Activated naive CD4-positive, alpha-beta T cell treated with anti-CD3 and anti-CD28 coated beads for 36 hours (primary cell): ENCODE measurements at regions of chr5 and their contacts with region 1.

Region 1: DNA sequence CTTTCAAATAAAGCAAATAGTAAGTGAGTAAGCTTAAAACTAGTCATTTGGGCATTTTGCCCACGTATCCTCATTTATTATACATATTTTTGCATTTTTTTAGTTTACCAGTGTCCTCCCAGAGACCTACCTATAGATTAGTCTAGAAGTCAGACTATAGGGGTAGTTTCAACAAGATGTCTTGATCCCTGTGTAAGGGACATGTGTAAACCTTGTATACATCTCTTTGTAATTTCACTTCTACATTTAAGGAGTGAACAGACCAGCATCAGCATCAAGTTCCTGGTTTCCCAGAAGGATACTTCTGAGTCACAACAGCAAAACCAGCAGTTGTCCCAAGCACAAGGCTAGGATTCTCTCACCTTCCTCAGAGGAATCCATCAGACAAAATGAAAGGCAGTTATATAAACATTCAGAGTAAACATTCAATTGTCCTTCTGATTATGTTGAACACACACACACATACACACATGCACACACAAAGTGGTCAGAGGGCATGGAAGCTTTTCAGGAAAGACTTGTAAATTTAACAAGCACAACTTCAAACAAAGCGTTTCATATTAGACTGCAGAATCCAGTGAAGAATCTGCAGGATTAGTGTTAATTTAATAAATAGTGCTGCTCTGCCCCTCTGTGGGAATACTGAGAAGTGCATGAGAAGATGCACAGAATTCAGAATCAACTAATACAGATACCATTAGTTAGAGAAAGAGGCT is 55.4 kb downstream of the HINT1 start:
- DNase-seq: peak; percentile 54
- H3K4me3 Mint-ChIP-seq: no peak overlapping the region
- H3K27ac Mint-ChIP-seq: no peak overlapping the region
- H3K4me1 Mint-ChIP-seq: peaks cover 6% of the 10 kb centered on the region
- H3K27me3 Mint-ChIP-seq: no peaks in the 10 kb centered on the region

Region 2: GRCh38 chr5:129852747-129853352 is 1256.8 kb before region 1 on chr5:
- CTCF ChIA-PET with region 1: no interaction called
- intact Hi-C with region 1: loop called (anchors 5 kb)
- DNase-seq: peak; percentile 85
- H3K4me3 Mint-ChIP-seq: no peak overlapping the region
- H3K27ac Mint-ChIP-seq: no peak overlapping the region
- H3K4me1 Mint-ChIP-seq: no peaks in the 10 kb centered on the region
- H3K27me3 Mint-ChIP-seq: peaks cover 18% of the 10 kb centered on the region

Region 3: GRCh38 chr5:129904102-129904666 is 1205.5 kb before region 1 on chr5 and contains the start of gene CHSY3:
- CTCF ChIA-PET with region 1: no interaction called
- intact Hi-C with region 1: loop called (anchors 5 kb)
- DNase-seq: peak; percentile 57
- H3K4me3 Mint-ChIP-seq: peak within 1 kb of the TSS; percentile 68
- H3K27ac Mint-ChIP-seq: no peak within 1 kb of the TSS
- H3K4me1 Mint-ChIP-seq: peaks cover 13% of the 10 kb centered on the region
- H3K27me3 Mint-ChIP-seq: peaks cover 41% of the 10 kb centered on the region
- total RNA-seq, gene CHSY3: not detected

Region 4: GRCh38 chr5:130109152-130109551 is 1000.5 kb before region 1 on chr5:
- CTCF ChIA-PET with region 1: no interaction called
- intact Hi-C with region 1: loop called (anchors 1 kb)
- DNase-seq: no peak
- H3K4me3 Mint-ChIP-seq: no peak overlapping the region
- H3K27ac Mint-ChIP-seq: no peak overlapping the region
- H3K4me1 Mint-ChIP-seq: peaks cover 6% of the 10 kb centered on the region
- H3K27me3 Mint-ChIP-seq: no peaks in the 10 kb centered on the region

Region 5: DNA sequence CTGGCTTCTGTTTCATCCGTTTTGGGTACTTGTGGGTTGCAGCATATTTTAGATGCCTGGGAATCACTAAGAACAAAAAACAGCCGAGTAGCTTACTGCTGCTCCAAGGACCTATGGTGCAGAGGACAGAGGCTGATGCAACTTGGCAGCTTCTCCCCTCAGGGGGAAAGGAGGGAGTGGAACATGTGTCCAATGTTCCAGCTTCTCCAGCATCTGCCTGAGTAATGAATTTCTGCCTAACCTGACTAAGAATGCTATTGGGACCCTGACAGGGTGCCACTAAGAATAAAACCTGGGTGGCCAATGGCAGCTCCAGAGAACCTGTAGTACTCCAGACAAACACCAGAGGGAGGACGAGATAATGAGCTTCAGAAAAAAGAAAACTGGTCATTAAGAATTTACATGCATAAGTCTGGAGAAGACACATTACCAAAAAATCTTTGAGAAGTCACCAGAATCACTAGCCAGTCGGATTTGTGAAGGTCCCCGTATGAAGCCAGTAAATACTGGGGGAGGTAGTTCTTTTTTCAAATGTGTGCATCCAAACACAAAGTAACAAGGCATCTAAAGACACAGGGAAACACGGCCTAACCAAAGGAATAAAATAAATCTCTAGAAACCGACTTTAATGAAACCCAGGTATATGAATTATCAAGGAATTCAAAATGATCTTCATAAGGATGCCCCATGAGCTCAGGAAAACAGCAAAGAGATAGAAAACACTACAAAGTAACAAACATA is 238.2 kb before region 1 on chr5:
- CTCF ChIA-PET with region 1: interaction called, 17 read pairs
- intact Hi-C with region 1: loop called (anchors 1 kb)
- DNase-seq: peak; percentile 53
- H3K4me3 Mint-ChIP-seq: no peak overlapping the region
- H3K27ac Mint-ChIP-seq: no peak overlapping the region
- H3K4me1 Mint-ChIP-seq: no peaks in the 10 kb centered on the region
- H3K27me3 Mint-ChIP-seq: no peaks in the 10 kb centered on the region

Region 6: GRCh38 chr5:131019111-131019974 is 90.4 kb before region 1 on chr5:
- CTCF ChIA-PET with region 1: no interaction called
- intact Hi-C with region 1: loop called (anchors 5 kb)
- DNase-seq: no peak
- H3K4me3 Mint-ChIP-seq: no peak overlapping the region
- H3K27ac Mint-ChIP-seq: no peak overlapping the region
- H3K4me1 Mint-ChIP-seq: peaks cover 5% of the 10 kb centered on the region
- H3K27me3 Mint-ChIP-seq: no peaks in the 10 kb centered on the region